Left colon (tissue), 2 donors: ENCODE measurements at regions of chr5 and their contacts with region 1.

Region 1: GRCh38 chr5:55936100-55936693 is 58.6 kb downstream of the IL6ST start:
- DNase-seq: peak; percentile 64 to 86
- ATAC-seq: peak; percentile 84

Region 2: DNA sequence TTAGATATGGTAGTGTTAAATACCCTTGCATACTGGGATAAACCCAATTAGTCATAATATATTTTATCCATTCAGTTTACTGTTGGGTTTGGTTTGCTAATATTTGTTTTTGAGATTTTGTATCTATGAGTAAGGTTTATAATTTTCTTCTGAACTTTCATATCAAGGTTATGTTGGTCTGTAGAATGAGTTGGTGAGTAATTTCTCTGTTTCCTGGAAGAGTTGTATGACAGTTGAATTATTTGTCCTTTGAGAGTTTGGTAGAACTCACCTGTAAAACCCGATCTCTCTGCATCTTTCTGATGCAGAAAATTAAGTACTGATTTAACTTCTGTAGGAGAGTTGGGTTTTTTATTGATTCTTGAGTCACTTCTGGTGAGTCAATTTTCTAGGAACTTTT is 178.0 kb before region 1 on chr5:
- intact Hi-C with region 1: no loop called
- DNase-seq: no peak
- ATAC-seq: no peak

Region 3: DNA sequence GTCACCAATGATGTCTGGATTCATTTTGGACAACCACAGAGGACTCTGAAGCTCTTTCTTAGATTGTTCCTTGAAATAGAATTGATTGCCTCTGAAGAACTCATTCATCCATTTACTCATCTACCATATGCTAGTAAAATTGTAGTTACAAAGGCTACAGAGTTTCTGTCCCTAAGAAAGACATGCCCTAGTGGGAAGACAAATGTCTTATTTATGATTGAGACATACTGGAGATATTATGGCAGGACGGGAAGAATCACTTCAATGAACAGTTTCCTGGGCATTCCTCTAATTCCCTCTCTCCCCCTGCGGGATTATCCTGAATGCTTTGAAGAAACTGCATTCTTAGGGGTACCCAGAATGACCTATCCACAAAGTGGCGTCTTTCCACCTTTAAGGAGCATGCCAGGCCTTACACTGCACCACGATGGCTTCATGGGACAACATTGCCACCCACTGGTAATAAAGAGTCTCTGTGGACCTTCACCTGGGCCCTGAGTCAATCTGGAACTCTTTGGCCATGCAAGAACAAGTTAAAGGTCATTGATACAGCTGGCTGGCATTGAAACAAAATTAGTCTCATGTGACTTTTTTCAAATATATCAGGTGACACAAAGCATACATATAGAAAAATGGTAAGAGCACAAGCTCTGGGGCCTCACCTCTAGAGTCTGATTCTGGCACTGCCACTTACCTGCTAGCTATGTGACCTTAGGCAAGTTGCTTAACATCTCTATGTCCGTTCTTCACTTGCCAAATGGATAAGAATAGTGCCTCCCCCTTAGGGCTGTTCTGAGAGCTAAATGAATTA is 264.9 kb after region 1 on chr5:
- intact Hi-C with region 1: loop called (anchors 5 to 10 kb)
- DNase-seq: peak; percentile 38 to 43
- ATAC-seq: peak; percentile 96